Activated T-helper 1 cell treated with anti-CD3 and anti-CD28 coated beads, Interleukin-12 subunit alpha, Interleukin-12 subunit beta, Interleukin-2, Interleukin-4 antibody, amounts not matched to agents 30 ng/mL and 10 ng/mL and 1 ng/mL, durations not matched to agents 14 hours and 24 hours and 36 hours (primary cell): ENCODE measurements at regions of chr13 and their contacts with region 1.

Region 1: DNA sequence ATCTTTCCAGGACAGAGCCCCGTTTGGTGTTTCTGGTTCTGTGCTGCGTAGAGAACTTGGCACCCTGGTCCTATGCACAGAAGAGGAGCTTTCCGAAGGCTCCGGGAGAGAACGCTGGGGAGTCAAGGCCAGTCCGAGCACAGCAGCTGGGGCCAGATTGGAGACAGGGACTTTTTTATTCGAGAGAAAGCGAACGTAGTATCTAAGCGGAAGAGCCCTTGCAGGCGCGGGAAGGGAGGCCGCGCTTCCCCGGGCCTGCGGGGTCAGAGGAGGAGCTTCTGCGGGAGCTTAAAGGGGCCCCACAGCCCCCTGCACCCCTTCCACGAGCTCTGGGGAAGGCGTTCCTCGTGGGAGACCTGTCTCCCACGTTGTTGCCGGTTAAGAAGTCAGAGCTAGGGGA is 48.6 kb upstream of the ARHGEF7 start:
- DNase-seq: no peak
- H3K4me3 Mint-ChIP-seq: peak overlapping the region; percentile 78
- H3K27ac Mint-ChIP-seq: no peak overlapping the region
- H3K4me1 Mint-ChIP-seq: peaks cover 6% of the 10 kb centered on the region
- H3K27me3 Mint-ChIP-seq: peaks cover 50% of the 10 kb centered on the region

Region 2: DNA sequence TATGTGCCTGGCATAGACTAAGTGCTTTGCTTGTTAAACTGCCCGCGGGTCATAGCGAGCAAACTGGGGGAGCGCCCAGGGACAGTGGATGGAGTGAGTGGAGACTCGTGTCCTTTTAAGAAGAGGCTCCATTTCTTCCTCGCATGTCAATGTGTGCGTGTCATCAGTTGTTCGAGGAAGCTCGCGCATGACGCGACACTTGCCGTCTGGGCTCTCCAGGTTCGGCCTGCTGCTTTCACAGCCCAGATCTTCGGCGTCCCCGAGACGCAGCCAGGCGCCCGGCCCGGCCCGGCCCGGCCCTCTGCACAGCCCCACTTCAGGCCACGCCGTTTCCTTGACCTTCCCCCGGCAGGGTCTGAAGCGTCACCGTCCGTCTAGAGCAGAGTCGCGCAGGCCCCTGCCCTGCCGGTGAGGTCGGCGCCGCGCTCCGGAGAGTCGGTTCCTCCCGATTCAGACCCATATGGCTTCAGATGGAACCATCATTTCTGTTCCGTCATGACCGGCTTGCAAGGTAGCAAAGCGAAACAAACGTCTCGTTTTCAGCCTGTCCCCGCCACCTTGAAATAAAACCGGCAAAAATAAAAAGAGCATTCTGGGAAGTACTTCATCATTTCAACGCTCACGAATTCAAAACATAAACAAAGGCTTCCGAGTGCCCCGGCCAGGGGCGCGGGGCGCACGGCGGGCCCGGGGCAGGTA is 48.0 kb after region 1 on chr13:
- intact Hi-C with region 1: loop called (anchors 5 kb)
- DNase-seq: peak; percentile 5
- H3K4me3 Mint-ChIP-seq: peak overlapping the region; percentile 82
- H3K27ac Mint-ChIP-seq: peak overlapping the region; percentile 40
- H3K4me1 Mint-ChIP-seq: peaks cover 10% of the 10 kb centered on the region
- H3K27me3 Mint-ChIP-seq: peaks cover 84% of the 10 kb centered on the region

Region 3: GRCh38 chr13:111219280-111219679 is 152.7 kb after region 1 on chr13:
- intact Hi-C with region 1: loop called (anchors 1 kb)
- DNase-seq: no peak
- H3K4me3 Mint-ChIP-seq: no peak overlapping the region
- H3K27ac Mint-ChIP-seq: no peak overlapping the region
- H3K4me1 Mint-ChIP-seq: peaks cover 36% of the 10 kb centered on the region
- H3K27me3 Mint-ChIP-seq: no peaks in the 10 kb centered on the region

Region 4: DNA sequence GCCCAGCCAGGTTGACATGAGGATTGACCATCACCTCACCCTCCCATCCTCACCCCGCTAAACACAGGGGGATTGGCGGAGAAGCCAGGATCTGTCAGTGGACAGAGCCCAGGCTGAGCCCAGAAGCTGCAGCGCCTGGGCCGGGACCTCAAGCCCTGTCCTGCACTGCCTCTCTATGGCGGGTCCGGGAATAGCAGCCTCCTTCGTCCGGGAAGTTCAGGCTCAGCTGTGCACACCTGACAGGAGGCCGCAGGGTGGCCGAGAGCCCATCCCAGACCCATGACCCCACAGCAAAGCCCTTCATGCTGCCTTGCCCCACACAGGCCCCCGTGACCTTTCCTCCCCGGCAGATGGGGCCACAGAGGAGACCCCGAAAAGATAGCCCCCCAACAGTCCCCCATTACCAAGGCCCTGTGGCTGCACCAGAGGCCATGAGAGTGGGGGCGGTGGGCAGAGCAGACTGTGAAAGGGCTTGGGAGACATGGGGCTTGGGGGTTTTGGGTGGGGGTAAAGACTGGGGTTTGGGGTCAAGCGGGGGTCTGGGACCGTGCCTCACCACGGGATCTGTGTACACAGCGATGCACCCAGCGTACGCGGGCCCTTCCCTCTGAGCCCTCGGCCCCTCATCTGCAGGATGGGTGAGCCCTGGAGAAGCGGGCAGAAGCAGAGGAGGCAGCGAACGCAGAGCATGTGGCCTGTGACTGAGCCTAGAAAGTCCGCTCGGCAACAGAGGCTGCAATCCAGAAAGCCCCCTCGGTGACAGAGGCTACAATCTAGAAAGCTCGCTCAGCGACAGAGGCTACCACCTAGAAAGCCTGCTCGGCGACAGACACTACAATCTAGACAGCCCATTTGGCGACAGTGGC is 1377.7 kb after region 1 on chr13:
- intact Hi-C with region 1: loop called (anchors 10 kb)
- DNase-seq: peak; percentile 27
- H3K4me3 Mint-ChIP-seq: no peak overlapping the region
- H3K27ac Mint-ChIP-seq: no peak overlapping the region
- H3K4me1 Mint-ChIP-seq: no peaks in the 10 kb centered on the region
- H3K27me3 Mint-ChIP-seq: peaks cover 3% of the 10 kb centered on the region